ENCODE measurements at regions of chr1 and their contacts with region 1.

Region 1: GRCh38 chr1:154847891-154848290 is 22.2 kb downstream of the KCNN3 start:
- DNase-seq: peak; percentile 92
- H3K4me3 ChIP-seq: no peak overlapping the region
- H3K27ac ChIP-seq: peak overlapping the region in 1 of 2 experiments; percentile 29; a peak in 1 of 4 replicates
- H3K4me1 ChIP-seq: peaks cover 7 to 52% of the 10 kb centered on the region in 2 experiments; a peak in 2 of 4 replicates
- H3K27me3 ChIP-seq: no peaks in the 10 kb centered on the region
- CTCF ChIP-seq: no peak
- EP300 ChIP-seq: peak in 1 of 2 experiments; percentile 29; a peak in 1 of 4 replicates
- RAD21 ChIP-seq: peak; percentile 9; the same call in 1 of the 2 replicates

Region 2: GRCh38 chr1:154863315-154864174 is 15.7 kb after region 1 on chr1:
- CTCF ChIA-PET with region 1: interaction called, 15 read pairs
- POLR2A ChIA-PET with region 1: no interaction called
- DNase-seq: peak; percentile 53
- H3K4me3 ChIP-seq: no peak overlapping the region; a peak in 1 of 4 replicates
- H3K27ac ChIP-seq: no peak overlapping the region
- H3K4me1 ChIP-seq: peaks cover 5 to 31% of the 10 kb centered on the region in 2 experiments; a peak in 2 of 4 replicates
- H3K27me3 ChIP-seq: peaks cover 8% of the 10 kb centered on the region; the same call in 1 of the 2 replicates
- CTCF ChIP-seq: peak; percentile 53
- EP300 ChIP-seq: no peak
- RAD21 ChIP-seq: 0 out of 2 replicates have a peak, but pooled peaks have one; percentile 5